Caco-2 (cell line): ENCODE measurements at regions of chr4 and their contacts with region 1.

Region 1: GRCh38 chr4:25993395-25994185 is 79.6 kb downstream of the SMIM20 start:
- DNase-seq: peak in 1 of 2 experiments; percentile 42
- H3K4me3 ChIP-seq: no peak overlapping the region
- H3K4me3 Mint-ChIP-seq: no peak overlapping the region
- H3K27ac Mint-ChIP-seq: no peak overlapping the region
- H3K4me1 ChIP-seq: no peaks in the 10 kb centered on the region
- H3K4me1 Mint-ChIP-seq: no peaks in the 10 kb centered on the region
- H3K27me3 ChIP-seq: no peaks in the 10 kb centered on the region
- H3K27me3 Mint-ChIP-seq: no peaks in the 10 kb centered on the region
- CTCF ChIP-seq: peak in 1 of 2 experiments; percentile 43

Region 2: DNA sequence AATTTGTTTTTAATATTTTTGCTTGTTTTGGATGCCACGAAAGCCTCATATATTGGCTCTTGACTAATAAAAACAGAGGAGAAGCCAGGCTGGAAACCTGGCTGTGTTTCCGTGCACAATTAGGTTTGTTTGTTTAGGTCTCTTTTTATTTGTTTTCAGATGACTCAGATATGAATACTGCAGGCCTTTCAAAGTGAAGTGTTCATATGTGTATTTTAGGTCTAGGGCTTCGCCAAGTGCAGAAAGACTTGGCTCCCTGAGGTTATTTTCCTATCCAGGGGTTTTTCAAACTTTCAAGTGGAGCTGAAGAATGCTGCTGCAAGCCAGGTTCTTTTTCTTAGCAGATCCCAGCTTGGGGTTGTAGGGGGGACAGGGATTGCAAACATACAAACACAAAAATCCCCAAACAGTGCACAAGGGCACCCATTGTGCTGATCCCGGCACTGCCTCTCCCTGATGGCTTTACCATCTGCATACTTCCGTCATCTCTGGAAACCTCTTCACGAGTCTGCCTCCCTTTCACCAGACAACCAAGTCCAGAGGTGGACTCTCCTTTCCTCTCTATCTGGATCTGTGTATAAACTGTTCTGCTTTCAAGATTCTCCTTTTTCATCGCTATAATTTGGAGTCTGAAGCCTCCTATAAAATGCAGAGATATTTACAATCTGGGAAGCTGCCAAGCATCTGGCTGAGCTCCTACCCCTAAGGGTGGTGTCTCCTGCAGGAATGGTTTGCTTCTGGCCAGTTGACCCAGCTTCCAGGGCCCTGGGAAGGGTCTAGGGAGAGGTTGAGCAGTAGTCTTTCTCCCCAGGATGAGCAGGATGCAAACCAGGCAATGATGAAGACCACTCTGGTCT is 29.0 kb after region 1 on chr4:
- CTCF ChIA-PET with region 1: no interaction called
- POLR2A ChIA-PET with region 1: no interaction called
- intact Hi-C with region 1: loop called (anchors 1 kb)
- DNase-seq: peak in 1 of 2 experiments; percentile 48
- H3K4me3 ChIP-seq: no peak overlapping the region
- H3K4me3 Mint-ChIP-seq: peak overlapping the region; percentile 29
- H3K27ac Mint-ChIP-seq: peak overlapping the region; percentile 27
- H3K4me1 ChIP-seq: peaks cover 22% of the 10 kb centered on the region
- H3K4me1 Mint-ChIP-seq: peaks cover 43% of the 10 kb centered on the region
- H3K27me3 ChIP-seq: no peaks in the 10 kb centered on the region
- H3K27me3 Mint-ChIP-seq: no peaks in the 10 kb centered on the region
- CTCF ChIP-seq: no peak

Region 3: GRCh38 chr4:26325191-26325590 is 331.6 kb after region 1 on chr4:
- CTCF ChIA-PET with region 1: no interaction called
- POLR2A ChIA-PET with region 1: no interaction called
- intact Hi-C with region 1: loop called (anchors 1 kb)
- DNase-seq: peak in 1 of 2 experiments; percentile 20
- H3K4me3 ChIP-seq: no peak overlapping the region
- H3K4me3 Mint-ChIP-seq: no peak overlapping the region
- H3K27ac Mint-ChIP-seq: no peak overlapping the region
- H3K4me1 ChIP-seq: peaks cover 12% of the 10 kb centered on the region; the same call in 1 of the 2 replicates
- H3K4me1 Mint-ChIP-seq: peaks cover 12% of the 10 kb centered on the region
- H3K27me3 ChIP-seq: no peaks in the 10 kb centered on the region
- H3K27me3 Mint-ChIP-seq: no peaks in the 10 kb centered on the region
- CTCF ChIP-seq: peak in 1 of 2 experiments; percentile 10